ENCODE measurements at regions of chr5 and their contacts with region 1.

Region 1: DNA sequence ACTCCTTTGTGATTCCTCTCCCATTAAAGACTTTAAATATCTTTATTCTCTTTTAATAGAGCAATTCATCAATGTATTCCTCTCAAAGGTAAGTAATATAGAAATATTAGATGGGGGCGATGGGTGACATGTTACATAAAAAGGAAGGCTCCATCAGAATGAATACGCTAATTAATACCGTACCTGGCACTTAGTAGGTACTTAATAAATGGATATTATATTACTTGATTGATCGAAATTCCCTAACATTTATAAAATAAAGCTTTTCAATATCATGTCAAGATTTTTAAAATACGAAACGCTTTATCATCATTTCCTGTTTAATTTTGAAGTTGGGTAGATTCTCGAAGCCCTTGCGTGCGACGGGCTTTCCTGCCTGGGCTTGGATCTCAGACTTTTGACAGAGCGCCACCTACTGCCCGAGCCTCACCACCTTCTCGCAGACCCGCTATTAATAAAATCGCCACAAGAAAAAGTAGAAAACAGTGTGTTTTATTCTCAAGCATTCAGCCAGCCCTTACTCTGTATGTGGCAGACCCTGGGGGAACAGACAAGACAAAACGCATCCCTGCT is 99.4 kb downstream of the C5orf15 start:
- H3K4me3 ChIP-seq: no peak overlapping the region
- H3K27ac ChIP-seq: no peak overlapping the region
- H3K4me1 ChIP-seq: no peaks in the 10 kb centered on the region; the same call in 1 of the 2 replicates
- CTCF ChIP-seq: peak; percentile 66

Region 2: DNA sequence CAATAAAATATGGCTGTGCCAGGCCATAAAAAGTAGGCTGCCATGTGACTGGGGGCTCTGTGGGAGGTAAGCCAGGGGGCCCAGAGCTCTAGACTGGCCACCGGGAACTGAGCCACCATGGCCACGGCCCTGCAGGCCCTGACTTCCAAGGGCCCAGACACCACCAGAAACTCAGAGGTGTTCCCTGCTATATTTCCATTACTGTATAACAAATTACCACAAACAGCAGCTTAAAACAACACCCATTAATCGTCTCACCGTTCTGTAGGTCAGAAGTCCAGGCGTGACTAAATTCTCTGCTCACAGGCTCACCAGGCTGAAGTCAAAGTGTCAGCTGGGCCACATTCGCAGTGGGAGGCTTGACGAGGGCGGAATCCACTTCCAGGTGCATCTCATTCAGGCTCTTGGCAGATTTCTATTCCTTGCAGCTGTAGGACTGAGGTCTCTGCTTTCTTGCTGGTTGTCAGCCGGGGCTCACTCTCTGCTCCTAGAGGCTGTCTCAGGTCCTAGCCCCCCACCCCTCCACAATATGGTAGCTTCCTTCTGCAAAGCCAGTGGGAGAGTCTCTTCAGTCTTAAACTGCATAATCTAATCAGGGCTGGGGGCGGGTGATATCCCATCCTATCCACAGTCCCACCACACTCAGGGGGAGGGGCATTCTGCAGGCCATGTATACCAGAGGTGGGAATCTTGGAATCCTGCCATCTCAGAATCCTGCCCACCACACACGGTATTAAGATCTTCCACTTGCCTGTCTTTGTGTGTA is 26.0 kb before region 1 on chr5:
- CTCF ChIA-PET with region 1: interaction called, 11 read pairs
- POLR2A ChIA-PET with region 1: no interaction called
- H3K4me3 ChIP-seq: no peak overlapping the region
- H3K27ac ChIP-seq: no peak overlapping the region
- H3K4me1 ChIP-seq: peaks cover 6% of the 10 kb centered on the region
- CTCF ChIP-seq: no peak

Region 3: GRCh38 chr5:133938929-133939328 is 69.9 kb after region 1 on chr5:
- CTCF ChIA-PET with region 1: interaction called, 12 read pairs
- POLR2A ChIA-PET with region 1: no interaction called
- H3K4me3 ChIP-seq: no peak overlapping the region
- H3K27ac ChIP-seq: peak overlapping the region; percentile 3; the same call in 1 of the 2 replicates
- H3K4me1 ChIP-seq: peaks cover 12% of the 10 kb centered on the region
- CTCF ChIP-seq: no peak